ENCODE measurements at regions of chr2 and their contacts with region 1.

Region 1: GRCh38 chr2:27050281-27050995 is 1.0 kb upstream of the AGBL5 start:
- DNase-seq: peak; percentile 77 to 95 (median 94)
- ATAC-seq: peak; percentile 76
- H3K4me3 ChIP-seq: peak overlapping the region; percentile 99
- H3K4me3 Mint-ChIP-seq: peak overlapping the region; percentile 86 to 100 (median 99)
- H3K27ac ChIP-seq: peak overlapping the region; percentile 84
- H3K27ac Mint-ChIP-seq: peak overlapping the region; percentile 96 to 100 (median 100)
- H3K4me1 ChIP-seq: peaks cover 8 to 15% of the 10 kb centered on the region in 2 donors
- H3K4me1 Mint-ChIP-seq: peaks cover 10 to 34% (median 19%) of the 10 kb centered on the region in 7 donors
- H3K27me3 ChIP-seq: no peaks in the 10 kb centered on the region
- H3K27me3 Mint-ChIP-seq: peaks cover 0 to 8% (median 4%) of the 10 kb centered on the region in 5 donors

Region 2: DNA sequence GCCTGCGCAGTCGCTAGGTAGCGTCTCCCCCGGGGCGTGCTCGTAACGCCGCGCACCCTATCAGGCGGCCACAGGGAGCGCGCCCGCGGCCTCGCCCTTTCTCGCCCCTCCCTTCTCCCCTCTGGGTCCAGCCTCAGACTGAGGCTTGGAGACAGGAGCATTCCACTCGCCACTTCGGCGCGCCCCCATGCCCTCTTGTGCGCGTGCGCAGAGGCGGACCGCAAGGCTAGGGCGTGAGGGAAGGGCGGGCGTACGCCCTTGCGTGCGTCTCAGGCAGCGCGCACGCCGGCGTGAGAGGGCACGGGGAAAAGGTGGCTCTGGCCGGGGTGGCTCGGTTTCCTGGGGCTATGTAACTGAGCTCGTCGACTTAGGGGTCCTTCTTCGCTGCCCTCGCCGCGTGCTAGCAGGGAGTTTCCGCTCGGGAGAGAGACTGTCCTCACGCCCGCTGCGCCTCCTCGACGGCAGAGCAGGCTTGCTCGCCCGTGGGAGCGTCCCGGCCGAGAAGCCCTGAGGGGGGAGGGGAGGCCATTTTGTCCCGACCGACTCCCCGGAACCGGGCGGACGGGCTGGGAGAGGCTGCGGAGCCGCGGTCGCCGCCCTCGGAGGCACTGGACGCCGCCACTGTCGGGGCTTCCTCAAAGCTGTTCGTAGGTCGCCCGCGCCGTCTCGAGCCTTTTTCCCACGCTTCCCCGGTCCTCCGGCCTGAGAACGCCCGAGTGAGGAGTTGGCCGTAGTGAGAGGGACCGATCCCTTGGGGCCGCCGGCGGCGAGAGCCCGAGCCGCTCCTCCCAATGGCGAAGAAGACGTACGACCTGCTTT is 1016.4 kb before region 1 on chr2 and contains the start of gene RAB10:
- CTCF ChIA-PET with region 1: no interaction called
- POLR2A ChIA-PET with region 1: no interaction called
- intact Hi-C with region 1: loop called in 1 of 2 experiments (anchors 5 kb)
- DNase-seq: peak; percentile 98 to 100 (median 99)
- ATAC-seq: peak; percentile 95
- H3K4me3 ChIP-seq: peak within 1 kb of the TSS; percentile 96
- H3K4me3 Mint-ChIP-seq: peak within 1 kb of the TSS; percentile 90 to 99 (median 96)
- H3K27ac ChIP-seq: peak within 1 kb of the TSS; percentile 90
- H3K27ac Mint-ChIP-seq: peak within 1 kb of the TSS; percentile 86 to 97 (median 95)
- H3K4me1 ChIP-seq: peaks cover 18 to 24% of the 10 kb centered on the region in 2 donors
- H3K4me1 Mint-ChIP-seq: peaks cover 31 to 48% (median 41%) of the 10 kb centered on the region in 7 donors
- H3K27me3 ChIP-seq: no peaks in the 10 kb centered on the region
- H3K27me3 Mint-ChIP-seq: peaks cover 0 to 2% (median 0%) of the 10 kb centered on the region in 5 donors
- total RNA-seq, gene RAB10: 25.6 to 108 (median 60.5) TPM

Region 3: DNA sequence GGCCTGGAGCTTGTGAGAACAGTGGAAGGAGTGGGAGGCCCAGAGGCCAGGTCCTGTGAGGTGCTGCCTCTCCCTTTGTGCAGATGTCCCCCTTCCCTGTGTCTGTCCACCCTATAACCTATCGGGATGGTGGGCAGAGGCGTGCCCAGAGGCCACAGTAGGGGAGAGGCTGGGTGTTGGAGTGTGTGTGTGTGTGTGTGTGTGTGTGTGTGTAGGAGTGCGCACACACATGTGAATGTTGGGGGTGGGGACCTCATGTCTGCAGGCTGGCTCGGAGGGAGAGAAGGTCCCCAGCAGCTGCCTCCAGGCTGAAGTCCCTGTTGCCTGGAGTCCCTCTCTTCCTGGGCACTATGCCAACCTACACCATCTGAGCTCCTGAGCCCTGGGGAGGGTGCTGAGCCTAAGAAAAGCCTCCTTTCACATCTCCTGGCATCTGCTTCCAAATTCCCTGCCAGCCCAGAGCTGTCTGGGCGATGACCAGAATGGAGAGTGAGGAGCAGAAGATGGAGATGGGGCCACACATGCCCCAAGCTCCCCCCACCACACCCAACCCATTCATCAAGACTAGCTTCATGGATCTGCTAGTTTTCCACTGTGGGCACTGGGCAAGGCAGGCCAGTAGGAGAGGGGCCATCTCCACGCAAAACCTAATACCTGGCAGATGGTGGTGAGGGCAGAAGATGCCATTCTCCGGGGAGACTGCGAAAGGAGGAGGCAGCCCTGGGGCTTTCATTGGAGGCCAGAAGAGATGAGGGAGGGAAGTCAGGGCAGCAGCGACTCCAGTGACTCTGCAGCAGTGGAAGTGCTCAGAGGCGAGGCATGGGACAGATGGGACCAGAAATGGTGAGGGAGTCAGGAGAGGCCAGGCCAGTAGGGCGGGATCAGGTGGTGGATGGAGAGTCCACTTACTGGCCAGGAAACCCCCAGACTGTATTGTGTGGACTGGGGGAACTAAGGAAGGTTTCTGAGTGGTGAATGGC is 337.7 kb before region 1 on chr2:
- CTCF ChIA-PET with region 1: no interaction called
- POLR2A ChIA-PET with region 1: no interaction called
- intact Hi-C with region 1: no loop called
- DNase-seq: no peak
- ATAC-seq: no peak
- H3K4me3 ChIP-seq: no peak overlapping the region
- H3K4me3 Mint-ChIP-seq: no peak overlapping the region
- H3K27ac ChIP-seq: no peak overlapping the region
- H3K27ac Mint-ChIP-seq: no peak overlapping the region
- H3K4me1 ChIP-seq: no peaks in the 10 kb centered on the region
- H3K4me1 Mint-ChIP-seq: no peaks in the 10 kb centered on the region
- H3K27me3 ChIP-seq: no peaks in the 10 kb centered on the region
- H3K27me3 Mint-ChIP-seq: no peaks in the 10 kb centered on the region

Region 4: DNA sequence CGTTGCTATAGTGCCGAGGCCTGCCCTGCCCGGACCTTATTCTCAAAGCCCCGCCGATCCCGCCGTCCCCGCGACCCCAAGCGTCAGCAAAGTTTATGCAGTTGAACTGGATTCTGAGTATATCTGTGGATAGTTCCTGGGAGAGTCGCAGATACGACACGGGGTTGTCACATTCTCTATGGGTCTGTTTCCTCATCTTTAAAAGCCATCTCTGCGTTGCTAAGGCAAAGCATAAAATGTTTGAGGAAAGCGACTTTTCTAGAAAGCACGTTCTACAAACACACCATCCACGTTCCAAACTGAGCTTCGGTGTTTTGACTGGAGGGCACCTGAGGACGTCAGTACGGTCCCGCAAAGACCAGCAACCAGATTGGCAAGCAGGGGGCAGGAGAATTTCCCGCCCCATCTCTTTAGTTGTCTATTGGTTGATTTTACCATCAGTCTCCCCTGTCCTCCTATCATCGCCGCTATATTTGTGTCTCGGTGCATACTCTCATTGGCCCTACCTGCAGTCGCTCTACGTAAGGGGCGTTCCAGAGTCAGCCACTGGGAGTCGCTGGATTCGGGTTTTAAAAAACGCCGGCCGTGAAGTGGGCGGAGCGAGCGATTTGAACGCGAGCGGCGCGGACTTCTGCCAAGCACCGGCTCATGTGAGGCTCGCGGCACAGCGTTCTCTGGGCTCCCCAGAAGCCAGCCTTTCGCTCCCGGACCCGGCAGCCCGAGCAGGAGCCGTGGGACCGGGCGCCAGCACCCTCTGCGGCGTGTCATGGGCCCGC is 264.8 kb before region 1 on chr2 and contains the start of gene CENPA:
- CTCF ChIA-PET with region 1: no interaction called
- POLR2A ChIA-PET with region 1: no interaction called
- intact Hi-C with region 1: loop called (anchors 1 kb)
- DNase-seq: peak; percentile 86 to 98 (median 96)
- ATAC-seq: peak; percentile 100
- H3K4me3 ChIP-seq: peak within 1 kb of the TSS; percentile 78
- H3K4me3 Mint-ChIP-seq: peak within 1 kb of the TSS; percentile 81 to 97 (median 88)
- H3K27ac ChIP-seq: peak within 1 kb of the TSS; percentile 60
- H3K27ac Mint-ChIP-seq: peak within 1 kb of the TSS; percentile 65 to 97 (median 89)
- H3K4me1 ChIP-seq: peaks cover 0 to 4% of the 10 kb centered on the region in 2 donors
- H3K4me1 Mint-ChIP-seq: peaks cover 10 to 34% (median 11%) of the 10 kb centered on the region in 7 donors
- H3K27me3 ChIP-seq: no peaks in the 10 kb centered on the region
- H3K27me3 Mint-ChIP-seq: peaks cover 0 to 26% (median 24%) of the 10 kb centered on the region in 5 donors
- total RNA-seq, gene CENPA: 0.37 to 25.6 (median 0.73) TPM in 3 of 5 experiments, not detected in the others

Region 5: GRCh38 chr2:26941486-26941885 is 109.0 kb before region 1 on chr2:
- CTCF ChIA-PET with region 1: no interaction called
- POLR2A ChIA-PET with region 1: no interaction called
- intact Hi-C with region 1: no loop called
- DNase-seq: no peak
- ATAC-seq: no peak
- H3K4me3 ChIP-seq: no peak overlapping the region
- H3K4me3 Mint-ChIP-seq: no peak overlapping the region
- H3K27ac ChIP-seq: no peak overlapping the region
- H3K27ac Mint-ChIP-seq: no peak overlapping the region
- H3K4me1 ChIP-seq: no peaks in the 10 kb centered on the region
- H3K4me1 Mint-ChIP-seq: peaks cover 0 to 7% (median 4%) of the 10 kb centered on the region in 7 donors
- H3K27me3 ChIP-seq: no peaks in the 10 kb centered on the region
- H3K27me3 Mint-ChIP-seq: peaks cover 3 to 17% (median 8%) of the 10 kb centered on the region in 5 donors

Region 6: GRCh38 chr2:27032495-27033252 is 17.8 kb before region 1 on chr2 and contains the start of gene TMEM214:
- CTCF ChIA-PET with region 1: no interaction called
- POLR2A ChIA-PET with region 1: interaction called, 28 read pairs
- intact Hi-C with region 1: loop called (anchors 1 kb)
- DNase-seq: peak; percentile 54 to 88 (median 63)
- ATAC-seq: peak; percentile 97
- H3K4me3 ChIP-seq: peak within 1 kb of the TSS; percentile 99
- H3K4me3 Mint-ChIP-seq: peak within 1 kb of the TSS; percentile 91 to 97 (median 93)
- H3K27ac ChIP-seq: peak within 1 kb of the TSS; percentile 87
- H3K27ac Mint-ChIP-seq: peak within 1 kb of the TSS; percentile 84 to 95 (median 91)
- H3K4me1 ChIP-seq: peaks cover 11 to 19% of the 10 kb centered on the region in 2 donors
- H3K4me1 Mint-ChIP-seq: peaks cover 24 to 63% (median 41%) of the 10 kb centered on the region in 7 donors
- H3K27me3 ChIP-seq: no peaks in the 10 kb centered on the region
- H3K27me3 Mint-ChIP-seq: no peaks in the 10 kb centered on the region
- total RNA-seq, gene TMEM214: 36.7 to 114 (median 67.5) TPM

Region 7: GRCh38 chr2:27079233-27080139 is 29.0 kb after region 1 on chr2:
- CTCF ChIA-PET with region 1: interaction called, 4 read pairs
- POLR2A ChIA-PET with region 1: interaction called, 216 read pairs
- intact Hi-C with region 1: loop called (anchors 1 kb)
- DNase-seq: no peak
- ATAC-seq: no peak
- H3K4me3 ChIP-seq: no peak overlapping the region
- H3K4me3 Mint-ChIP-seq: no peak overlapping the region
- H3K27ac ChIP-seq: no peak overlapping the region
- H3K27ac Mint-ChIP-seq: peak overlapping the region in 4 of 9 donors; percentile 79 to 97 (median 96)
- H3K4me1 ChIP-seq: peaks cover 18 to 32% of the 10 kb centered on the region in 2 donors
- H3K4me1 Mint-ChIP-seq: peaks cover 27 to 53% (median 45%) of the 10 kb centered on the region in 7 donors
- H3K27me3 ChIP-seq: no peaks in the 10 kb centered on the region
- H3K27me3 Mint-ChIP-seq: no peaks in the 10 kb centered on the region

Region 8: GRCh38 chr2:27211829-27212627 is 161.6 kb after region 1 on chr2 and contains the starts of genes ATRAID and SLC5A6:
- CTCF ChIA-PET with region 1: no interaction called
- POLR2A ChIA-PET with region 1: interaction called, 5 read pairs
- intact Hi-C with region 1: loop called (anchors 1 kb)
- DNase-seq: peak; percentile 86 to 93 (median 92)
- ATAC-seq: peak; percentile 93
- H3K4me3 ChIP-seq: peak within 1 kb of the TSS; percentile 91
- H3K4me3 Mint-ChIP-seq: peak within 1 kb of the TSS; percentile 89 to 100 (median 99)
- H3K27ac ChIP-seq: peak within 1 kb of the TSS; percentile 100
- H3K27ac Mint-ChIP-seq: peak within 1 kb of the TSS; percentile 99 to 100 (median 100)
- H3K4me1 ChIP-seq: peaks cover 14 to 17% of the 10 kb centered on the region in 2 donors
- H3K4me1 Mint-ChIP-seq: peaks cover 18 to 49% (median 42%) of the 10 kb centered on the region in 7 donors
- H3K27me3 ChIP-seq: no peaks in the 10 kb centered on the region
- H3K27me3 Mint-ChIP-seq: no peaks in the 10 kb centered on the region
- total RNA-seq, gene ATRAID: 71.0 to 113 (median 90.7) TPM
- total RNA-seq, gene SLC5A6: 25.6 to 203 (median 44.3) TPM

Region 9: DNA sequence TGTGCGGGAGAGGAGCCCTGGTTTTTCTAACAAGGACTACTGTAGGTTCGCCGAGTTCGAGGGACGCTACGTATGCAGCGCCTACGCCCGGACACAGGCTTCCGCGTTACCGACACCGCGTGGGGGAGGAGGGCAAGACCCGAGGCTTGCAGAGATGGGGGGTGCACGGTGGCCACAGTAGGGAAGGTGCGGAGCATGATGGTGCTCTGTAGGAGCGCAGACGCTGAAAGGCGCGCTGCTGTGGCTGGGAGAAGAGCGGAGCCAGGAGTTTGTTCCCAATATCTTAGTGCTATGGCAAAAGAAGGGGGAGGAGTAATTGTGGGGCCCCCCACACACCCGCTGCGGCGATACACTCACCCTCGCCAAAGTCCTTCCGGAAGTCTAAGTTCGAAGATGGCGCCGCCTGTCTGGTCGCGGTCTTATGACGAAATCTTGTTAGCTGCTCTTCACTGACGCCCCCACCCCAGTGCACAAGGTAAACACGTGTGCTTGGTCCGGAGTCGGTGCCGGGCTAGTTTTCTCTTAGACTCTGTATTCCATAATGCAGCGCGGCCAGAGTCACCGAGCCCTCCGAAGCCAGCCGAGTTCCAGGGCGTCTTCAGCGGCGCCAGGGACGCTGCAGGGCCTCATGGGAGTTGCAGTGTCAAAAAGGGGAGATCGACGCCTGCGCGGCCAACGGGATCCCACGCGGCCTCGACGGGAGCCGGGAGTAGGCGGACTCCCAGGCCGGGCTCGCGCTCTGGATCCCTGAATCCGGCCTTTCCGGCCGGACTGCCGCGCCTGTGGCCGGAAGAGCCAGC is 306.1 kb after region 1 on chr2 and contains the start of gene GTF3C2:
- CTCF ChIA-PET with region 1: no interaction called
- POLR2A ChIA-PET with region 1: no interaction called
- intact Hi-C with region 1: loop called in 1 of 2 experiments (anchors 1 kb)
- DNase-seq: peak; percentile 76 to 94 (median 92)
- ATAC-seq: peak; percentile 85
- H3K4me3 ChIP-seq: peak within 1 kb of the TSS; percentile 96
- H3K4me3 Mint-ChIP-seq: peak within 1 kb of the TSS; percentile 95 to 100 (median 98)
- H3K27ac ChIP-seq: peak within 1 kb of the TSS; percentile 91
- H3K27ac Mint-ChIP-seq: peak within 1 kb of the TSS; percentile 96 to 100 (median 99)
- H3K4me1 ChIP-seq: peaks cover 24 to 34% of the 10 kb centered on the region in 2 donors
- H3K4me1 Mint-ChIP-seq: peaks cover 38 to 63% (median 56%) of the 10 kb centered on the region in 7 donors
- H3K27me3 ChIP-seq: no peaks in the 10 kb centered on the region
- H3K27me3 Mint-ChIP-seq: no peaks in the 10 kb centered on the region
- total RNA-seq, gene GTF3C2: 68.0 to 106 (median 78.3) TPM

Measured in naive thymus-derived CD4-positive, alpha-beta T cell (primary cell).